IMR-90 (cell line): ENCODE measurements at regions of chr7 and their contacts with region 1.

Region 1: DNA sequence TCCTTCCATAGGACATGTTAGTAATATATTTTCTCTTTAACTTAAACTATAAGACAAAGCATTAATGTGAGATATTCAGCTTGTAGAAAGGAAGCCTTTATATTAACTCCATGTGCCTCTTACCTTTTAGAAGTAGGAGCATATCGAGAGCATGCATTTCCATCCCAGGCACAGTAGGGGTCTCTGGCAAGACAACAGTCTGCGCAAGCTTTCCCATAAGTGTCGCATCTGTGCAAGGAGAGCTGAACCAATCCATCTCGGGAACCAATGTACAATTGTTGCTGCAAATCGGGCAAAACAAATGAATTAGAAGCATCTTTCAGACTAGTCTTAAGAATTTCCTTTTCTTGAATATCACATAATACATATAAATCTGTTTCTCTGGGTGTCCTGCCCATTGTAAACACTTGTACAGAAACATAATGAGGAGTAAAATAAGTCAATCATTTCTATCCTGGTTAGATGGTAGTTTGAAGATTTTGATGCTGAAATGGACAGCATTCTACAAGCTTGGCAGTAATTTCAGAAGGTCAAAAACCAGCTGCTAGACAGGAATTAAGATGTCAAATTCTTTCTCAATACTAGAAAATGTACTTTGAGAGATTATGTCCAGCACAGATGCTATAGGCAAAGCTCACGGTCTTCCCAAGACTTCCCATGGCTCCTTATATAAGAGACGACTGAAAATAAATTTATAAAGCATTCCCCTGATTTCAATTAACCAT is 171.8 kb downstream of the SEMA3D start:
- DNase-seq: no peak
- ATAC-seq: no peak
- H3K4me3 ChIP-seq: no peak overlapping the region
- H3K27ac ChIP-seq: no peak overlapping the region
- H3K4me1 ChIP-seq: no peaks in the 10 kb centered on the region
- H3K27me3 ChIP-seq: no peaks in the 10 kb centered on the region
- CTCF ChIP-seq: no peak
- POLR2A ChIP-seq: no peak
- RAD21 ChIP-seq: no peak

Region 2: GRCh38 chr7:84647797-84648757 is 367.0 kb before region 1 on chr7:
- CTCF ChIA-PET with region 1: no interaction called
- POLR2A ChIA-PET with region 1: no interaction called
- dilution Hi-C with region 1: no loop called
- in situ Hi-C with region 1: loop called (anchors 25 kb)
- intact Hi-C with region 1: loop called (anchors 10 kb)
- DNase-seq: peak; percentile 94
- ATAC-seq: peak; percentile 96
- H3K4me3 ChIP-seq: no peak overlapping the region
- H3K27ac ChIP-seq: peak overlapping the region; percentile 69
- H3K4me1 ChIP-seq: peaks cover 8% of the 10 kb centered on the region
- H3K27me3 ChIP-seq: no peaks in the 10 kb centered on the region
- CTCF ChIP-seq: no peak
- POLR2A ChIP-seq: no peak
- RAD21 ChIP-seq: no peak